HepG2 (cell line): ENCODE measurements at regions of chr14 and their contacts with region 1.

Region 1: DNA sequence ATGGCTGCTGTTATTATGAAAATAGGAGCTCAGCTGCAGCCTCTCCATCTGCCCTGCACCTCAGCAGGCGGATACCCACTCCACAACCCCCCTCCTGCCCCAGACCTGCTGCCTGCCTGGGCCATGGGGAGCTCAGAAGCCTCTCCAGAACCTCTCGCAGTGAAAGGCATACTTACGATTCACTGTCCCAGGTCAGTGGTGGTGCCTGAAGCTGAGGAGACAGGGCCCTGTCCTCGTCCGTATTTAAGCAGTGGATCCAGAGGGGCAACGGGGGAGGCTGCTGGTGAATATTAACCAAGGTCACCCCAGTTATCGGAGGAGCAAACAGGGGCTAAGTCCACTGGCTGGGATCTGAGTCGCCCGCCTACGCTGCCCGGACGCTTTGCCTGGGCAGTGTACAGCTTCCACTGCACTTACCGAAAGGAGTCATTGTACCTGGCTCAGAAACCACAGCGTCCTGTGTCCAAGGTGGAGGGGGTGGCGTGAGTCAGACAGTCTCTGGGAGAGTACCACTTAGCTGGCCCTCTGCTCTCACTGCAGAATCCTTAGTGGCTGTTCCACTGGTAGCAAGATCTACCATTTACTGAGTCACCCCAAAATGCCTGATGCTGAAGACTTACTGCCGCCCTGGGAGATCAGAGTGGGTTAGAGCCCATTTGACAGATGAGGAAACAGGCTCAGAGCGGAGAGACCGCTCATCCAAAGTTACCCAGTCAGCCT is at the start of gene SERPINA1:
- DNase-seq: peak; percentile 96
- ATAC-seq: peak; percentile 92
- H3K4me3 ChIP-seq: peak within 1 kb of the TSS; percentile 69 to 92 (median 87)
- H3K27ac ChIP-seq: peak within 1 kb of the TSS; percentile 90
- H3K4me1 ChIP-seq: peaks cover 81% of the 10 kb centered on the region
- H3K27me3 ChIP-seq: no peaks in the 10 kb centered on the region; a peak in 1 of 5 replicates
- CTCF ChIP-seq: peak; percentile 38; the same call in 1 of the 2 replicates
- EP300 ChIP-seq: peak in 1 of 2 experiments; percentile 95; a peak in 2 of 4 replicates
- POLR2A ChIP-seq: peak; percentile 99 to 100
- RAD21 ChIP-seq: no peak; the same call in none of the 2 replicates
- total RNA-seq, gene SERPINA1: 2,013 and 3,266 TPM in 2 replicates

Region 2: DNA sequence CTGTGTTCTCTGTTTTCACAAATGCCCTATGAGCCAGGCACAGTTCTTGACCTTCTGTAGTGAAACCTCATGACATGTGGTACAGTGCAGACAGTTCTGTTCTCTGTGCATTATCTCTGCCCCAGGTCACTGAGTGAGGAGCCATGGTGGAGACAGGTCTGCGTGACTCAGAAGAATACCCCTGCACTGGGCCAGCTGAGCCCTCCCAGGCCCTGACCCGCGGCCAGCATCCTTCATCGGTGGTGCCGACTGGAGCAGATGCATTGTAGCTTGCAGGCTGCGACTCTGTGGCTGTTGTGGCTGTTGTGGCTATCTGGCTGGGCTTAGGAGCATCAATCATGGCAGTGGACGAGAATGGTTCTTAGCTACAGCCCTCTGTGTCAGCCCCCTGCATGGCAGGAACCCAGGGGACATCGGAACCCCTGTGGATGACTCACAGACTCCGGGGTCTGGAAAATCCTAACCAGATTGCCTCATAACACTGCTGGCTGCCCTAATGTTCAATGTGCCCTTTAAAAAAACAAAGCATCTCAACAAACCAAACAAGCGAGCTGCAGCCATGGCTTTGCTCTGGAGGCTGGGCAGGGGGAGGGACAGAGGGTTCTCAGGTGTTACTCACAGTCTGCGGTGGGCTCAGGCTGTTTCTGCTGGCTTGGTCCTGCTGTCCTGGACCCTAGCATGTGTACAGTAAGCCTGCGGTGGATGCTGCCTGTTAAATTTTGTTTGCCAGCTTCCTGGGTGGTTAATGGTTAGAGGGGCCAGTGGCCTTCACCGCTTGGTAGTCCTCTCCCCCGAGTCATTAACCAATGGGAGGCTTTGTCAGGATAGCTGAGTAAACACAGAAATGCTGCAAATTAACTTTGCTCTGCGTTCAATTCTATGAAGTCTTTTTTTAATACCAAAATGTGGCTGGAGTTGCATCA is 65.6 kb before region 1 on chr14 and contains the start of gene SERPINA6:
- CTCF ChIA-PET with region 1: no interaction called
- POLR2A ChIA-PET with region 1: interaction called, 20 read pairs
- in situ Hi-C with region 1: no loop called
- intact Hi-C with region 1: no loop called
- DNase-seq: peak; percentile 95
- ATAC-seq: peak; percentile 92
- H3K4me3 ChIP-seq: peak within 1 kb of the TSS; percentile 61 to 87 (median 67)
- H3K27ac ChIP-seq: peak within 1 kb of the TSS; percentile 87
- H3K4me1 ChIP-seq: peaks cover 72% of the 10 kb centered on the region
- H3K27me3 ChIP-seq: no peaks in the 10 kb centered on the region
- CTCF ChIP-seq: no peak
- EP300 ChIP-seq: peak in 1 of 2 experiments; percentile 60; a peak in 2 of 4 replicates
- POLR2A ChIP-seq: peak; percentile 84 to 99
- RAD21 ChIP-seq: peak; percentile 31; the same call in 1 of the 2 replicates
- total RNA-seq, gene SERPINA6: 144 and 260 TPM in 2 replicates

Region 3: GRCh38 chr14:94368243-94368860 is 20.2 kb before region 1 on chr14:
- CTCF ChIA-PET with region 1: no interaction called
- POLR2A ChIA-PET with region 1: interaction called, 14 read pairs
- in situ Hi-C with region 1: no loop called
- intact Hi-C with region 1: no loop called
- DNase-seq: no peak
- ATAC-seq: no peak
- H3K4me3 ChIP-seq: no peak overlapping the region; a peak in 1 of 6 replicates
- H3K27ac ChIP-seq: peak overlapping the region; percentile 68
- H3K4me1 ChIP-seq: peaks cover 100% of the 10 kb centered on the region
- H3K27me3 ChIP-seq: no peaks in the 10 kb centered on the region
- CTCF ChIP-seq: no peak
- EP300 ChIP-seq: no peak
- POLR2A ChIP-seq: no peak
- RAD21 ChIP-seq: no peak

Region 4: DNA sequence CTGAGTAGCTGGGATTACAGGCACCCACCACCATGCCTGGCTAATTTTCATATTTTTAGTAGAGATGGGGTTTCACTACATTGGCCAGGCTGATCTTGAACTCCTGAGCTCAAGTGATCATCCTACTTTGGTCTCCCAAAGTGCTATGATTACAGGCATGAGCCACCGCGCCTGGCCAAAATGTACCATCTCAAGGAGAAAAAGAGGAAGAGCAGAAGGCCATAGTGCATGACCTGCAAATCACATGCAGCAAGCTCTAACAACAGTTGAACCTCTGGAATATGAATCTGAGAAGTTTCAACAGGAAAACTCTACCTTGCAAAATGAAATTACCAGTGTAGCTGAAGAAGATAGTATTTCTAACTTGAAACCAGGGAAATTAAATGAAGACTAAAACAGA is 16.9 kb after region 1 on chr14:
- CTCF ChIA-PET with region 1: no interaction called
- POLR2A ChIA-PET with region 1: interaction called, 180 read pairs
- in situ Hi-C with region 1: no loop called
- intact Hi-C with region 1: no loop called
- DNase-seq: no peak
- ATAC-seq: no peak
- H3K4me3 ChIP-seq: no peak overlapping the region
- H3K27ac ChIP-seq: no peak overlapping the region
- H3K4me1 ChIP-seq: peaks cover 79% of the 10 kb centered on the region
- H3K27me3 ChIP-seq: no peaks in the 10 kb centered on the region
- CTCF ChIP-seq: no peak
- EP300 ChIP-seq: no peak
- POLR2A ChIP-seq: no peak
- RAD21 ChIP-seq: no peak

Region 5: DNA sequence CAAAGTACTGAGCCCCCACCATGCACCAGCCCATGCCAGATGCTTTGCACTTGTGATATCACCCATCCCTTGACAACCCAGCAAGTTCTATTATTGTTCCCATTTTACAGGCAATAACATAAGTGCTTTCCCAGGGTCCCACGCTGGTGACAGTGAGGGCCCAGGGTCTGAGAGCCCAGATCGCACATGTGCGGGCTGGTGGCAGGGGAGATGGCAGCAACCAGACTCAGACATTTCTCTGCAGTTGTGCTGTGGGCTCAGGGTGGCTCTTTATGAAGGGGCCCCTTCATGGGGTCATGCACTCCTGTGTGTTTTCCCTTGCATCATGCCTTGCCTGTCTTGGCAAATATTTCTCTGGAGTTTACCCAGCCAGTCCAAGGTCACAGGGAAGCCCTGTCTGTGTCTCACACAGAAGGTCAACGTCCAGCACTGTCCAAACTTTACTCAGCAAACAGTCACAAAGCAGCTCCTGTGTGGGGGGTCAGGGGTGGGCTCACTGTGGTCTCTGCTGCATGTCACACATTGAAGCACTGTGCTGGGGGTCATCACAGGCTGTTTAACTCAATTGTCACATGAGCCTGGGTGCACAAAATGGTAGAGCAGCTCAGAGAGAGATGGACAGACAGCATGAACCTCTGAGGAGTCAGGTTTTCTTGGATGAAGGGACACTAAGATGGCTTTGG is 205.3 kb after region 1 on chr14:
- CTCF ChIA-PET with region 1: no interaction called
- POLR2A ChIA-PET with region 1: interaction called, 26 read pairs
- in situ Hi-C with region 1: no loop called
- intact Hi-C with region 1: no loop called
- DNase-seq: peak; percentile 100
- ATAC-seq: peak; percentile 81
- H3K4me3 ChIP-seq: peak overlapping the region in 2 of 3 experiments; percentile 25 to 54; a peak in 2 of 6 replicates
- H3K27ac ChIP-seq: peak overlapping the region; percentile 86
- H3K4me1 ChIP-seq: peaks cover 73% of the 10 kb centered on the region
- H3K27me3 ChIP-seq: no peaks in the 10 kb centered on the region
- CTCF ChIP-seq: peak; percentile 35
- EP300 ChIP-seq: peak; percentile 100
- POLR2A ChIP-seq: peak in 1 of 2 experiments; percentile 7; a peak in 1 of 4 replicates
- RAD21 ChIP-seq: peak; percentile 70